Right ventricle myocardium inferior (tissue), 1 donor: ENCODE measurements at regions of chr12 and their contacts with region 1.

Region 1: DNA sequence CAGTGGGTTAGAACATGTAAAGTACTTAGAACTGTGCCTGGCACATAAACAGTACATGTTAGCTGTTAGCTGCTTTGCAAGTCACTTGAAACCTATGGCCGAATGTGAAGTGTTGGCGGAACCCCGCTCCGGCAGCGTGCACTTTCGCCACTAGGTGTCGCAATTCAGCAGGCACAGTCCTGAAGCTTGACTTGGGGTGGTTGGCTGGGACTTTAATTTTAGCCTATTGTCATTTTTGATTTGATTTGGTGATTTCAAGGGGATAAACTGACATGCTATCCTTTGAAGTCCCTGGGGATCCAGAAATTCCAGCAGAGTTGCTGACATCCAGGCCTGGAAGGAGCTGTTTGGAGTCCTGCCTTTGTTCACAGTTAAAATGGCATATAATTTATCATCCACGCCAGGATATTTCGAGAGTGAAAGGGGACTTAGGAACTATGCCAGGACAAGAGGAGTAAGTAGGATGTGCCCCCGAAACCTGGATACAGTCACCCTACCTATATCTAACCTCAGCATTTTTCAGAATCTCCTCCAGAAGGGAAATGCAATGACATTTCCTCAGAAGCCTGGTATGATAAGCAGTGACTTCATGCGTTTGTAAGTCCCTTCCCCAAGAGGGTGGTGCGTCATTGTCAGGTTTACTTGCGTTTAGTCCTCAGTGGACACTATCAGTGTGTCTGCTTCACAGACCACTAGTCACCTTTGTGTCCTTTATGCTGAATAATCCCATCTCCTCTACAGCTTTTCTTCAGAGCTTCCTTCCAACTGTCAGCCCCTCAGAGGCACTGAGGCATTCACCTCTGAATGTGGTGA is 3.5 kb upstream of the TSPAN9 start:
- DNase-seq: peak; percentile 83
- ATAC-seq: peak; percentile 38

Region 2: GRCh38 chr12:2769871-2770533 is 303.6 kb before region 1 on chr12:
- intact Hi-C with region 1: no loop called
- DNase-seq: no peak
- ATAC-seq: no peak

Region 3: DNA sequence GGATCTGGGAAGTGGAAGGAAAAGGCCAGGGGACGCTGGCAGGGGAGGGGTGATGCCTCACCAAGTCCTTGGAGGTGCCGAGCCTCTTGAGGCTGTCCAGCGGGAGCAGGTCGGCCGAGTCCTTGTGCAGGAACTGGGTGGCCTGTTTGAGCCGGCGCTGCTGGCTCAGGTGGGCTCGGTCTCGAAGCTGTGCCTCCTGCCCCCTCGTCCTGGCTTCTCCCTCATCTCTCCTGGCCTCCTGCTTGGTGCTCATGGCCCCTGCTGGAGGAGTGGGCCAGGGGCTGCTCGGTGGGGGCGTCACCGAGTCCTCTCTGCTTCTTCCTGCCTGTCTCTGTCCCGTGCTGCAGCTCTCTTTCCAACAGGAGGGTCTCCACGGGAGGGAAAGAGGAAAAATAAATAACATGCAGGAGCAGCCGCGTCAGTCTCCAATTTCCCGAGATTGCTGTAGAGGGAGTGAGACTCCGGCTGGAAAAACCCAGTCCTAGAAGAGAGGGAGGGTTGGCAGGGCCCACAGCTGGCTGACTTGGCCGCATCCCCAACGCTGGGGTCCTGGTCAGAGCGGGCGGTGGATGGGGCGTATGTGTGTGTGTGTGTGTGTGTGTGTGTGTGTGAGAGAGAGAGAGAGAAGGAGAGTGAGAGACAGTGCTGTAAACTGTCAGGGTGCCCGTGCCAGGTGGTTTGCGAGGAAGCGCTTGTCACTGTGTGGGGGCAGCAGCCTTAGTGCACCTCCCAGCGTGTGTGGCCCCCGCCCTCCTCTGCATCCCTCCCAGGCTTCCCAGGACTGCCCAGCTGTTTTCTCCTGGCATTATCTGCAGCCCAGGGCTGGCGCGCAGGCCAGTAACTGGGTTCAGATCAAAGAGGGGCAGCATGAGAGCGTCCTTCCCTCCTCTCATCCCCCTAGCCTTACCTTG is 238.8 kb before region 1 on chr12 and contains the start of gene NRIP2:
- intact Hi-C with region 1: no loop called
- DNase-seq: no peak
- ATAC-seq: peak; percentile 47
- total RNA-seq, gene NRIP2: 3.2 TPM

Region 4: DNA sequence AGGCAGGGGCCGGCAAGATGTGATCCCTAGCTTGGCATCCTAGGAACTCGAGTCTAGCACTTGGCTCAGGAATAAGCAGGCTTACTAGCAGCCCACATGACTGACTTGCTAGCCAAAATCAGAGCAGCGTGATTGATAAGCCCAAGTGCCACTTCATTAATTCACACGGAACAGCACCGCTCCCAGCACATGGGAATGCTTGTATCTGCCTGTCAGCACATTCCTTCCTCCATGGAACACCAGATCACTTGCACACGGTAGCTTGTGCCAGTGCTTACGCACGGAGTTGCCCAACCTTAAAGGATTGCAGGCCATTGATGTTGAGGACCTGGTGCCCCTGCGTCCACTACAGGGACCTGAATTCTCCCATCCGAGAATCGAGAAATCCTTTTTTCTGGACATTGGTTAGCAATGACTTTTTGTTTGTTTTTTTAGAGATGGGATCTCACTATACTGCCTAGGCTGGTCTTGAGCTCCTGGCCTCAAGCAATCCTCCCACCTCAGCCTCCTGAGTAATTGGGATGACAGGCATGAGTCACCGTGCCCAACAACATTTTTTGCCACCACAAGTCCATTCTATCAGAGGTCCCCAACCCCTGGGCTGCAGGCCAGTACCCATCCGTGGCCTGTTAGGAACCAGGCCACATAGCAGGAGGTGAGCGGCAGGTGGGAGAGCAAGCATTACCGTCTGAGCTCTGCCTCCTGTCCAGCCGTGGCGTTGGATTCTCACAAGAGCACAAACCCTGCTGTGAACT is 27.0 kb before region 1 on chr12:
- intact Hi-C with region 1: loop called (anchors 2 kb)
- DNase-seq: no peak
- ATAC-seq: peak; percentile 88

Region 5: GRCh38 chr12:3135522-3136461 is 62.1 kb after region 1 on chr12:
- intact Hi-C with region 1: loop called (anchors 2 kb)
- DNase-seq: no peak
- ATAC-seq: peak; percentile 48

Region 6: GRCh38 chr12:3275171-3276041 is 201.8 kb after region 1 on chr12:
- intact Hi-C with region 1: loop called (anchors 2 kb)
- DNase-seq: peak; percentile 87
- ATAC-seq: peak; percentile 61